ENCODE measurements at regions of chr6 and their contacts with region 1.

Region 1: GRCh38 chr6:116287689-116288282 is 8.1 kb upstream of the TSPYL1 start:
- DNase-seq: no peak
- CTCF ChIP-seq: peak; percentile 87

Region 2: DNA sequence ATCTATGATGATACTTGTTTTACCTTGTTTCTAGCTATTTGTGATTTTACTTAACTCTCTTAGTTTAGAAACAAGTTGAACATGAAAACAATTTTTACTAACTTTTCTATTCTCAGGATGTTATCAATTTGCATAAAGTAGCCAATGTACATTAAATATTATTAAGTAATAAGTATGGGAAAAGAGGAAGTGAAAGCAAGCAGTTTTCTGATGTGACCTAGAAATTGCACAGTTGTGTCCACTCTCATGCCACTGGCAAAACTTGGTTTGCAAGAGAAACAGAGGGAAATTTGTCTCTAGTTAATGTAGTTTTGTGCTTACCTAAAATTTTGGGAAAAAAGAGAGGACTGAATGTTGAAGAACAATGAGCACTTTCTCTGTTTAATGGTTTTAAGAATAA is 11.2 kb after region 1 on chr6:
- CTCF ChIA-PET with region 1: interaction called, 26 read pairs
- POLR2A ChIA-PET with region 1: no interaction called
- DNase-seq: no peak
- CTCF ChIP-seq: no peak

Region 3: GRCh38 chr6:116359131-116359530 is 71.3 kb after region 1 on chr6:
- CTCF ChIA-PET with region 1: interaction called, 23 read pairs
- POLR2A ChIA-PET with region 1: no interaction called
- DNase-seq: no peak
- CTCF ChIP-seq: no peak

Region 4: GRCh38 chr6:116456927-116457326 is 169.1 kb after region 1 on chr6:
- CTCF ChIA-PET with region 1: interaction called, 12 read pairs
- POLR2A ChIA-PET with region 1: no interaction called
- DNase-seq: no peak
- CTCF ChIP-seq: no peak

Region 5: GRCh38 chr6:116531675-116532570 is 244.1 kb after region 1 on chr6:
- CTCF ChIA-PET with region 1: interaction called, 62 read pairs
- POLR2A ChIA-PET with region 1: no interaction called
- DNase-seq: peak; percentile 58
- CTCF ChIP-seq: peak; percentile 76

Region 6: GRCh38 chr6:116561377-116562018 is 273.7 kb after region 1 on chr6:
- CTCF ChIA-PET with region 1: interaction called, 57 read pairs
- POLR2A ChIA-PET with region 1: no interaction called
- DNase-seq: peak; percentile 55
- CTCF ChIP-seq: peak; percentile 96